ENCODE measurements at regions of chr6 and their contacts with region 1.

Region 1: GRCh38 chr6:44074439-44075136 is 52.7 kb downstream of the MRPL14 start:
- DNase-seq: peak; percentile 69 to 87 (median 84)
- H3K4me3 ChIP-seq: peak overlapping the region in 55 of 59 donors; percentile 15 to 78 (median 65)
- H3K27ac ChIP-seq: peak overlapping the region in 55 of 59 donors; percentile 18 to 98 (median 88)
- H3K27me3 ChIP-seq: no peaks in the 10 kb centered on the region
- CTCF ChIP-seq: peak; percentile 70 to 97 (median 91)

Region 2: GRCh38 chr6:43616725-43617472 is 457.7 kb before region 1 on chr6:
- intact Hi-C with region 1: loop called in 1 of 2 experiments (anchors 10 kb)
- DNase-seq: peak in 2 of 10 donors; percentile 6 to 15
- H3K4me3 ChIP-seq: no peak overlapping the region
- H3K27ac ChIP-seq: no peak overlapping the region
- H3K27me3 ChIP-seq: no peaks in the 10 kb centered on the region
- CTCF ChIP-seq: no peak

Region 3: DNA sequence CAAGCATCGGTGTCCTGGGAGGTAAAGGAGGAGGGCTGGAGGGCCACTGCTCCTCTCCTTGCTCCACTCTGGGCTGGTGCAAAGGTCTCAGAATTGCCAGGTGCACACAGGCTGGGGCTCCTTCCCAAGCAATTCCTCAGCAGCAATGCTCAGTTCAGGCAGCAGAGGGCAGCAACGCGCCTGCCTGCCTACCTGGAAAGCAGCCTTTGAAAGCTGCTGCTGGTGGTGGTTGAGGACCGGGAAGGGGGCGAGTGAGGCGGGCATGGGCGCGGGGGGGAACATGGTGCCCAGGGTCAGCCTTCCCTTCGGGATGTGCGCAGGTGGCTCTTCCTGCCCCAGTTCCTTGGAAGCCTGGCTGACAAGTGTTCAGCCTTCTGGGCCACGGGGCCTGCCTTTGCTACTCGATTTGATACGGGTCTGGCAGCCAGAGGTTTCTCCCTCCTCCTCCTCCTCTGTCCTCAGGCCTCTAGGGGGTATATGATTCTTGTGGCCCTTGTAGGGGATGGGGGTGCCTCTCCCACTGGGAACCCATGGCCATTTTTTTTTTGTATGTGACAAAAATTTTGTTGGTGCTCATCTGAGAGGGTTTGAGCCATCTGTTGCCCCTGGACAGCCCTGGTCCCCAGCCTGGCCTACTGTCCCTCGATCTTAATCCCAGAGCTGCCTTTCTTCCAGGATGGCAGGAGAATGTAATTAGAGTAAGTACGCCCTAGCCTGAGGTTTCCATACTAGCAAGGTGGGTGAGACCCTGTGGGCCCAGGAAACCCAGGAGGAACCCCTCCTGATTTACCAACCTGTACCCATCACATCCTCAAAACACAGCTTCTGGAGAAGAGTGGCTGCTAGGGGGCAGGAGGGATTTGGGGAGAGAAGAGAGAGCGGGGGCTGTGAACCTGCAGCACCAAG is 407.1 kb before region 1 on chr6:
- intact Hi-C with region 1: loop called (anchors 1 to 2 kb)
- DNase-seq: peak; percentile 72 to 91 (median 88)
- H3K4me3 ChIP-seq: peak overlapping the region in 28 of 59 donors; percentile 8 to 43 (median 24)
- H3K27ac ChIP-seq: peak overlapping the region in 56 of 59 donors; percentile 2 to 94 (median 80)
- H3K27me3 ChIP-seq: no peaks in the 10 kb centered on the region
- CTCF ChIP-seq: peak; percentile 68 to 98 (median 94)

Region 4: GRCh38 chr6:43878823-43879495 is 195.6 kb before region 1 on chr6:
- intact Hi-C with region 1: loop called (anchors 10 kb)
- DNase-seq: peak; percentile 35 to 79 (median 66)
- H3K4me3 ChIP-seq: no peak overlapping the region
- H3K27ac ChIP-seq: peak overlapping the region in 39 of 59 donors; percentile 6 to 79 (median 51)
- H3K27me3 ChIP-seq: no peaks in the 10 kb centered on the region
- CTCF ChIP-seq: no peak

Region 5: GRCh38 chr6:44086931-44087574 is 12.5 kb after region 1 on chr6:
- intact Hi-C with region 1: no loop called
- DNase-seq: peak in 1 of 10 donors; percentile 39
- H3K4me3 ChIP-seq: no peak overlapping the region
- H3K27ac ChIP-seq: no peak overlapping the region
- H3K27me3 ChIP-seq: no peaks in the 10 kb centered on the region
- CTCF ChIP-seq: no peak

Region 6: GRCh38 chr6:44297063-44298038 is 222.8 kb after region 1 on chr6:
- intact Hi-C with region 1: no loop called
- DNase-seq: peak in 7 of 10 donors; percentile 40 to 80 (median 63)
- H3K4me3 ChIP-seq: peak overlapping the region; percentile 45 to 81 (median 69)
- H3K27ac ChIP-seq: peak overlapping the region in 52 of 59 donors; percentile 8 to 86 (median 66)
- H3K27me3 ChIP-seq: peaks cover 0 to 16% (median 0%) of the 10 kb centered on the region in 45 donors
- CTCF ChIP-seq: no peak

Measured in dorsolateral prefrontal cortex (tissue), 120 donors.